AG04449 (cell line): ENCODE measurements at regions of chr18 and their contacts with region 1.

Region 1: DNA sequence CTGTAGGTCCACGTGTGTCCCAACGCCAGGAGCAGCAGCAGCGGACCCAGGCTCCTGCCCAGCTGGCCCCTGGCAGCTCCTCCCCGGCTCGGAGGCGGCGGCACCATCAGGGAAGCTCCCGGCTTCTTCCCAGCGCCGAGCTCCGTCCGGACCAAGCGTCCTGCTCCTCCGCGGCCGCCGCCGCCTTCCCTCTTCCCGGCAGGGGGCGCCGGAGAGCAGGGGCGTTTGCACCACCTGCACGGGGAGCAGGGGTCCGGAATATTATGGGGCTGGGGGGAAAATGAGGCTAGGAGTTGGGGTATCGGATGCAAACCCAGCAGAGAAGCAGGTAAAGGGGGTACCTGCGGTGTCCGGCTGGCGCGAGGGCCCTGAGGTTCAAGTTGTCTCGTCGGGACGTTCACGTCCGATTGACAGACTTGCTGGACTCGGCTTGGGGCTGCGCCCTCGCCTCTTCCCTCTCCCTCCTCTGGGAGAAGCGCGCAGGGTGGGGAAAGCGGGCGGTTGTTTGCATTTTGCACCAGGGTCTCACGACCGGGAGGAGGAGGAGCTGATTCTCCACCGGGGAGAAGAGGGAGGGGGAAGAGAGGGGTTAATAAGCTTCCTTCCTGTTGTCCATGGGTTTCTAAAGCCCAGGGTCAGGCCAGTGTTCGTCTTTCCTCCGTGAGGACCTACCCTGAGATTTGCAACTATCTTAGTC is at the start of gene CCBE1:
- DNase-seq: no peak
- H3K4me3 ChIP-seq: peak within 1 kb of the TSS; percentile 94
- CTCF ChIP-seq: peak; percentile 97

Region 2: GRCh38 chr18:59279193-59279592 is 418.2 kb before region 1 on chr18:
- CTCF ChIA-PET with region 1: no interaction called
- POLR2A ChIA-PET with region 1: no interaction called
- DNase-seq: no peak
- H3K4me3 ChIP-seq: no peak overlapping the region
- CTCF ChIP-seq: no peak

Region 3: DNA sequence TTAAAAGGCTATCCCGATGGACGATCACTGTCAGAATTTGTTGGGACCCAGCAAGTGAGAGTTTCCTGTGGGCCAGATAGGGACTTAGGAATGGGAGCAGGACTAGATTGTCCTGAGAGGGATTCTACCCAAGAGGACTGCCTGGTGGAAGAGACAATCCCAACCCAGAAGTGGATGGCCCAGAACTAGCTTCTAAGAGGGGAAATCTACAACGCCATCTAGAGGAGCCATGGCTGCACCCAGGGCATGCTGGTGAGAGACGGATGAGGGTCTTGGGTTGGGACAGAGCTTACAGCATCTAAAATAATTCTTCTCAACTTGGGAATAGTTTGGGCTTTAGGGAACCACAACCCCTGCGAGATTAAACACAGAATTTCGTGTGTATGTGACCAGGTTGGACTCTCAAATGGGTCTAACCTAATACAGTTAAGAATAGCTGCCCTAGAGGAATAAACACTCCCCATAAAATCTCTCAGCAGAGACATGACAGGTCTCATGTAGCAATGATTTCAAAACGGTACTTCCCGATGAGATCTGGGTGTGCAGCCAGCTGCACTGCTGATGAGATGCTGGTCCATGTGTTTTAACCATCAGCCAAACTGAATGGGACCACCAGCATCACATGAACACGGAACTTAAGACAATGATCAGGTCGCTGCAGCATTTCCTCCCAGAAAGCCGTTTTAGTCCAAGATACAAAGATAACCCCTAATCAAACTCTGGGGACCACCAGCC is 51.0 kb before region 1 on chr18:
- CTCF ChIA-PET with region 1: interaction called, 17 read pairs
- POLR2A ChIA-PET with region 1: no interaction called
- DNase-seq: no peak
- H3K4me3 ChIP-seq: no peak overlapping the region
- CTCF ChIP-seq: no peak

Region 4: DNA sequence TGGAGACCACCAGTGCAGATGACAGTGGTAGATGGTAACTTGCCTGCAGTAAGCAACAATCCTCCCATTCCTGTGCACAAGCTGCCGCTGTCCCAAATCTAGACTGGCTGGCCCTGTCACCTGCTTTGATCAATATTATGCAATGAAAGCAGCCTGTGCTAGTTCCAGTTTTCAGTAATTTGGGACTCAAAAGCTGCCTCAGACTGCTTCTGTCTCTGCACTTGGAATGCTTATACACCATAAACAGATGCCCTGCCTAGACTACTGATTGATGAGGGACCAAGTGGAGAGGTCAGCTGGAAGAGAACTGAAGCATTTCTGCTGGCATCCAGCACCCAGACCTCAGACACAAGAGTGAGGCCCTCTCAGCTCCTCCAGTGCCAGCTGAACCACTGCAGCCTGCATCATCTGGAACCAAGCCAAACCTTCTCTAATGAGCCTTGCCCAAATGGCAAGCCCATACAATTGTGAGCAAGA is 25.1 kb before region 1 on chr18:
- CTCF ChIA-PET with region 1: interaction called, 32 read pairs
- POLR2A ChIA-PET with region 1: no interaction called
- DNase-seq: no peak
- H3K4me3 ChIP-seq: no peak overlapping the region
- CTCF ChIP-seq: no peak

Region 5: GRCh38 chr18:59715966-59716369 is 18.6 kb after region 1 on chr18:
- CTCF ChIA-PET with region 1: interaction called, 53 read pairs
- POLR2A ChIA-PET with region 1: interaction called, 4 read pairs
- DNase-seq: peak; percentile 69
- H3K4me3 ChIP-seq: no peak overlapping the region
- CTCF ChIP-seq: peak; percentile 17

Region 6: GRCh38 chr18:59744271-59744721 is 46.9 kb after region 1 on chr18:
- CTCF ChIA-PET with region 1: interaction called, 27 read pairs
- POLR2A ChIA-PET with region 1: interaction called, 4 read pairs
- DNase-seq: peak; percentile 97
- H3K4me3 ChIP-seq: no peak overlapping the region
- CTCF ChIP-seq: no peak

Region 7: DNA sequence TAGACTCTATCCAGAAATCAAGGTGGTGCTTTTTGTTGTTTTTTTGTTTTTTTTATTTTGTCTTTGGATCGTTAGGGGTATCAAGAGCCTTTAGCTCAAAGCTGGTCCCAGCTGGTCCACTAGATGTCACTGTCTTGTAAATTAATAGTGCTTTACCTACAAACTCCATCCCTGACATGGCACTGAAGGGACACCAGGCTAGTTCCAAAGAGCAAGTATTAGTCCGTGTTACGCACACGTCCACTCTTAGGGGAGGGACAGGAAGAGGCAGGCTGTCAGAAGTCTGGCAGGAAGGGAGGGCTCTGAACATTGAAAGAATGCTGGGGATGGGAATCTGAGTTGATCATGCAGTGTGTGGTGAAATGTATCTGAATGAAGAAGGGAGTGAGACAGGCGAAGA is 85.8 kb after region 1 on chr18:
- CTCF ChIA-PET with region 1: interaction called, 15 read pairs
- POLR2A ChIA-PET with region 1: no interaction called
- DNase-seq: no peak
- H3K4me3 ChIP-seq: no peak overlapping the region
- CTCF ChIP-seq: peak; percentile 46